Naive thymus-derived CD4-positive, alpha-beta T cell (primary cell): ENCODE measurements at regions of chr18 and their contacts with region 1.

Region 1: DNA sequence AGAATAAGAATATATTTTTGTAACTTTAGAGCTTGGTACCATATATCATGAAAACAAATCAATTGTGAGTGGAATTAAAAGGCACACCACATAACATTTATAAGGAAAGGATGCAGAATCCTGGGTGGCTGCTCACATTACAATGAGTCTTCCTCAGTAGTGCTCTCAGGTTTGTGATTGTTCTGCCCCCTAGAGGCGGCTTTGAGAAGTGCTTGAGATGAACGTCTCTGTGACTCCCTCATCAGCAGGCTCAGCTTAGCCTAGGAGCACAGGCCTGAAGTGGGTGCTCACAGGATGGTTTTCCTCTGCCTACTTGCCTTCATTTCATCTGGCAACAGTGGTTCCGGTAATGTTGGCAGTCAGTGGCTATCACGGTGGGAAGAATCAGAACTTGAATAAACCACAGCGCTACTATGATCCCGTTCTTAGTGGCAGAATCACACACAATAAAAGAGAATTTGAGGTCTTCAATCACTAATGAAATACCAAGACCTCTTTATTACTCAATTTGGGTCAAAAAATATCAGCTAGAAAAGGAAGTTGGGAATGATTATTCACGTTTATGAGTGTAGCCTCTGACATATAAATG is 38.1 kb upstream of the B4GALT6 start:
- DNase-seq: peak; percentile 33 to 69 (median 62)
- ATAC-seq: peak; percentile 90
- H3K4me3 ChIP-seq: no peak overlapping the region
- H3K4me3 Mint-ChIP-seq: peak overlapping the region in 3 of 10 donors; percentile 19 to 31 (median 27)
- H3K27ac ChIP-seq: no peak overlapping the region
- H3K27ac Mint-ChIP-seq: peak overlapping the region in 1 of 9 donors; percentile 21
- H3K4me1 ChIP-seq: no peaks in the 10 kb centered on the region
- H3K4me1 Mint-ChIP-seq: peaks cover 0 to 8% (median 6%) of the 10 kb centered on the region in 7 donors
- H3K27me3 ChIP-seq: no peaks in the 10 kb centered on the region
- H3K27me3 Mint-ChIP-seq: peaks cover 14 to 35% (median 23%) of the 10 kb centered on the region in 5 donors

Region 2: DNA sequence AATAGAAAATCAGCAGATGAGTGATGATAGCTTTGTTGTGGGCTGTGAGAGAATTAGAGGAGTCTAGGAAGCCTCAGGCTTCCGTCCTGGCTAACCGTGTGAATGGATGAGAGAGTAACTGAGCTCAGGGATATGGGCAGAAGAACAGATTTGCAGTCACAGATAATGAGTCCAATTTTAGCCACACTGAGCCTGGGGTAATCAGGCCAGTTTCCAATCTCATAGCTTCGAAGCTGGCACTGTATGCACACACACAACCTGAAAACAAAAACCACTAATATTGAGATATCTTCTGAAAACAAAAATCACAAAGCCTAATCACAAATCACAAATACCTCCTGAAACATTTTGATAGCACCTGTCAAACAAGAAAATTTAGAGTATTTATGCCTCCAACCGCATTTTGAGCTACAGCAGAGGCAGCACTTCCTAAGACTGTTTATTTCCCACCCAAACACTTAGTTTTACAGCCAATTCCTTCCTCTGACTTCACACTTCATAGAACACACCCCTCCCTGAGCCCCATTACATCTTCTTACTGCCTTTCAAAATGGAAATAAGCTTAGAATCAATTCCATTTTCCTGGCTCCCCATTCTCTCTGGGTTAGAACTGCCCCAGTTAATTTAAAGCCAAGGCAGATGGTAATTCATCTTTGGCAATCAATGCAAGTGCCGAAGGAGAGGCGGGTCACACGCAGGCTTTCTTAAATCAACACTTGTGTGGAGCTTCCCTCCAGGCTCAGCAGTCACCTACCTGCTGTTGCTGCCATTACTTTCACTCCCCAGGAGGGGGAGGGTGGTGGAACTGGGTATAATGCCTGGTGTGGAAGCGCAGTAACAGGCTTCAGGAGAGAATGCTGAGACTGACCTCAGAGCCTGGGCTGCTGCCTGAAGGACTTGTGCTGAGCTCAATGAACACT is 111.9 kb before region 1 on chr18:
- CTCF ChIA-PET with region 1: no interaction called
- POLR2A ChIA-PET with region 1: no interaction called
- intact Hi-C with region 1: loop called in 1 of 2 experiments (anchors 5 kb)
- DNase-seq: no peak
- ATAC-seq: no peak
- H3K4me3 ChIP-seq: no peak overlapping the region
- H3K4me3 Mint-ChIP-seq: no peak overlapping the region
- H3K27ac ChIP-seq: no peak overlapping the region
- H3K27ac Mint-ChIP-seq: no peak overlapping the region
- H3K4me1 ChIP-seq: no peaks in the 10 kb centered on the region
- H3K4me1 Mint-ChIP-seq: no peaks in the 10 kb centered on the region
- H3K27me3 ChIP-seq: no peaks in the 10 kb centered on the region
- H3K27me3 Mint-ChIP-seq: peaks cover 0 to 5% (median 3%) of the 10 kb centered on the region in 5 donors